Mammary epithelial cell (primary cell): ENCODE measurements at regions of chr22 and their contacts with region 1.

Region 1: GRCh38 chr22:47891609-47892008 is 1129.2 kb downstream of the TBC1D22A start:
- DNase-seq: no peak
- H3K4me3 ChIP-seq: no peak overlapping the region
- H3K27ac ChIP-seq: no peak overlapping the region
- H3K4me1 ChIP-seq: no peaks in the 10 kb centered on the region
- H3K27me3 ChIP-seq: no peaks in the 10 kb centered on the region
- CTCF ChIP-seq: no peak

Region 2: DNA sequence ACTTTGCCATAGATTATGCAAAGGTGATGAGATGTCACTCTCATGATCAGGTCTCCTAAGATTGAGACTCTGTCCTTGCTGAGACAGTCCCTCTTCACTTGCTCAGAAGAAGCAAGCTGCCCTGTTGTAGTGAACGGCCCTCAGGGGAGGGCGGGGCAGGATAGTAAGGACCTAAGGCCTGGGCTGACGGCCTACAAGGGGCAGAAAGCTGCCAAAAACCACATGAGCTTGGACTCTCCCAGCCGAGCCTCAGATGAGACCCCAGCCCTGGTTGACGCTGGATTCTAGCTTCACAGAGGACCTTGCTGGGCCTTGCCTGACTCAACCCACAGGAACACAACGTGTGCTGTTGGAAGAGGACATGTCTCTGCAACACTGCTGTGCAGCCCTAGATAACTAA is 53.3 kb after region 1 on chr22:
- CTCF ChIA-PET with region 1: no interaction called
- dilution Hi-C with region 1: loop called (anchors 5 kb)
- in situ Hi-C with region 1: no loop called
- intact Hi-C with region 1: no loop called
- DNase-seq: no peak
- H3K4me3 ChIP-seq: no peak overlapping the region
- H3K27ac ChIP-seq: no peak overlapping the region
- H3K4me1 ChIP-seq: no peaks in the 10 kb centered on the region
- H3K27me3 ChIP-seq: no peaks in the 10 kb centered on the region
- CTCF ChIP-seq: no peak